HAP-1 (cell line): ENCODE measurements at regions of chr6 and their contacts with region 1.

Region 1: GRCh38 chr6:7725849-7726415 is at the start of gene BMP6:
- DNase-seq: peak; percentile 85 to 92
- H3K4me3 ChIP-seq: peak within 1 kb of the TSS; percentile 33
- H3K4me1 ChIP-seq: no peaks in the 10 kb centered on the region
- H3K27me3 ChIP-seq: peaks cover 51% of the 10 kb centered on the region

Region 2: DNA sequence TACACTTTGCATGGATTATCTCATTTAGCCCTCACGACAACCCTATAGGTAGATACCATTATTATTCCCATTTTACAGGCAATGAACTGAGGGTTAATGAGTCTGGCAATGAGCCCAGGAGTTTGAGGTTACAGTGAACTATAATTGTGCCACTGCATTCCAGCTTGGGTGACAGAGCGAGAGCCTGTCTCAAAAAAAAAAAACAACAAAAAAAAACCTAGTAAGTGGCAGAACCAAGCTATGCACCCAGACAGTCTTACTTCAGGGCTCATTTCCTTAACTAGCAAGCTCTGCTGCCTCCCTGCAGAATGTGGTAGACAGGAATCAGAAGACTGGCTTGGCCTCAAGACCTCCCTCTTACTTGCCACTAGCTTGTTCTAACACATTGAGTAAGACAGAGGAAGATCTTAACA is 690.1 kb before region 1 on chr6:
- in situ Hi-C with region 1: no loop called
- DNase-seq: no peak
- H3K4me3 ChIP-seq: no peak overlapping the region
- H3K4me1 ChIP-seq: peaks cover 3% of the 10 kb centered on the region; the same call in 1 of the 2 replicates
- H3K27me3 ChIP-seq: no peaks in the 10 kb centered on the region

Region 3: DNA sequence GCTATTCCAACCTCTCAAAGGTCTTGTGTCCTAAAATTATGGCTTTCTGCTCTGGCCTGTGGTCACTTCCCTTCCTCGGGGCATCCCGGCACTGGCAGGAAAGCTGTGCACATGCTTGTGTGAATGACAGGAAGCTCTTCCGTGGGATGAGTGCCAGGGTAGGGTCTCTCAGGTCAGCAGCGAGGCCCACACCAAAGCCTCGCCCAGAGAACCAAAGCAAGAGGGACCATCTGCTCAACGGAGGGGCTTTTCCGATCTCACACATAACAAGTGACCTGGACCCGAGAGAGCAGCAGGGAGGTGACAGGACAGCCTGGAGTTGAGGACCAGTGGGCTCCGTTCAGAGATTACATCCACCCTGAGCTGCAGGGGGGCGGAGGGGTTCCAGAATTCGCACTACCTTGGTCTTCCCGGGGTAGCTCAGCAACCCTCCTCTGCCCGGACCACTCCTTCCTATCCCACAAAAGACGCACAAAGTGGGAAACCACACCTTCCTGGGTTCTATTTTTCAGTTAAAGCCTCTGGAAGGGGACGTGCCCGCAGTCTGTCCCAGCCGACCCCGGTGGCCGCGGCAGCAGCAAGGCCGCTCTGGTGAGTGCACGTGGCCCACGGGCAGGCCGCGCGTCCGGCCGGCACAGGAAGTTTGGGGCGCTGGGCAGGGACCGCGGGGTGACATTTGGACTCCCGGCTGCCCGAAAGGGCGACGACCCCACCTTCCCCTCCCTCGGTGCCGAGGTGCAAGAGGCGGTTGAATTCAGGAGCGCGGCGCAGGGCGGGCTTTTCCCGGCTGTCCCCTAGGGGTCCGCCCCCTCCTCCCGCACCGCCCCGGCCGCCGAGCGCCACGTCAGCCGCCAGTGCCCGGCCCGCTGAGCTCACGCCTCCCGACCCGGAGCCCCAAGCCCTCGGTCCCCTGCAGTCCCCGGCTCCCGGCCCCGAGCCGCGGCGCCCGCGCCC is 183.7 kb after region 1 on chr6:
- in situ Hi-C with region 1: loop called (anchors 10 kb)
- DNase-seq: peak; percentile 38 to 81
- H3K4me3 ChIP-seq: peak overlapping the region; percentile 71
- H3K4me1 ChIP-seq: peaks cover 9% of the 10 kb centered on the region
- H3K27me3 ChIP-seq: no peaks in the 10 kb centered on the region; the same call in 1 of the 2 replicates

Region 4: DNA sequence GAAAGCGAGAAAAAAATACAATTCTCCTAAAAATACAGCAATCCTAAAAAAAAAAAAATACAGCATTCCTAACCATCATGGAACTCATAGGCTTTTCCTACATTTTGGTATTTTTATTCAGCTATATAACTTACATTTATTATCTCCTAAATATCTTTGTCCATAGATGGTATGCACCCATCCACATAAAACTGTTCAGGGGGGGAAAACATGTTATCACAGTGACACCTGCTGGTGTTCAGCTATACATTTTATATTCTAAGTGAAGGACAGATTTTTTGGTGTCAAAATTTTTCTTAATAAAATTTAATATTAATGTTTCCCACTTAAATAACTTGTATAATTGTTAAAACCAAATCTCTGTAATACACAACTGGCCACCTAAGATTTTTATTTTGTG is 280.3 kb after region 1 on chr6:
- in situ Hi-C with region 1: loop called (anchors 10 kb)
- DNase-seq: peak in 1 of 2 experiments; percentile 18
- H3K4me3 ChIP-seq: no peak overlapping the region
- H3K4me1 ChIP-seq: no peaks in the 10 kb centered on the region
- H3K27me3 ChIP-seq: no peaks in the 10 kb centered on the region

Region 5: GRCh38 chr6:8130399-8130798 is 404.5 kb after region 1 on chr6:
- in situ Hi-C with region 1: no loop called
- DNase-seq: no peak
- H3K4me3 ChIP-seq: no peak overlapping the region
- H3K4me1 ChIP-seq: no peaks in the 10 kb centered on the region
- H3K27me3 ChIP-seq: peaks cover 9% of the 10 kb centered on the region

Region 6: GRCh38 chr6:8157839-8158238 is 431.9 kb after region 1 on chr6:
- in situ Hi-C with region 1: no loop called
- DNase-seq: no peak
- H3K4me3 ChIP-seq: no peak overlapping the region
- H3K4me1 ChIP-seq: no peaks in the 10 kb centered on the region
- H3K27me3 ChIP-seq: peaks cover 5% of the 10 kb centered on the region; the same call in 1 of the 2 replicates